ENCODE measurements at regions of chr2 and their contacts with region 1.

Region 1: DNA sequence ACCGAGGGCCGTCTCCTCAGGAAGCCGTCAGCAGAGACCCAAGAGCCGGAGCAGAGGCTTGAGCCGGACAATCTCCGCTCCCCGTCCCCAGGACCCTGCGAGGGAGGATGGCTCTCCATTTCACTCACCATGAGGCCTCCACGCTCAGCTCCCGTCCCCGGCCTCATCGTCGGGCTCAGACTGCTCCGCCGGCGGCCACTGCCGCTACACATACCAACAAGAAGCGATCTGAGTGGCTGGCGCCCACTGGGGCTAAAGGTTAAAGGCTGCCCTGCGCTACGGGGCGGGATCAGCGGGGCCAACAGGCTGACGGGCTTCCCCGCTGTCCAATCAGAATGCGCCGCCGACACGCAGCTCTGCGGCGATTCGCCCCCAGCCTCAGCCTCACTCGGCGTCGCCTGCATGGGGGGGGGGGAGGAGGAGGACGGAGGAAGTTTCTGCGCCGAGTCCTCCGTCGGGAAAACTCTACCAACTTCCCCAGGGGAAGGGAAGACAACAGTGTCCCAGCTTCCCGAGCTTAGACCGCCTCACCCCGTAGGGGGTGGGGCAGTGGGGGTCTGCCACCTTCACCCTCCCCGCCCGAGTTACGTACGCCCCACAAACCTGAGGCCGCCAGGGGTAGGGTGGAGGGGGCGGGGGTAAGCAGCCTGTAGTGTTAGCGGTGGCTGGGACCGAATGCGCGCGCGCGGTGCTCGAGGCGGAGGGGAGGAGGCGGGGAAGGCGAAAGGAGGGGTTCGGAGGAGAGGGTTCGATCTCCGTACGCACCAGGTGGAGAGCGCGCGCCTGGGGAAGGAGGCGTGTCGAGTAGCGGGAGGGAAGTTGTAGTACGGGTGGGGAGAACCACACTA is at the start of gene PRPF40A:
- DNase-seq: peak; percentile 98
- ATAC-seq: peak; percentile 76
- H3K4me3 ChIP-seq: peak within 1 kb of the TSS; percentile 99
- H3K27ac ChIP-seq: peak within 1 kb of the TSS; percentile 83
- H3K4me1 ChIP-seq: peaks cover 22% of the 10 kb centered on the region
- H3K27me3 ChIP-seq: no peaks in the 10 kb centered on the region
- CTCF ChIP-seq: no peak
- total RNA-seq, gene PRPF40A: 120 and 140 TPM in 2 replicates

Region 2: GRCh38 chr2:152638056-152638455 is 79.4 kb before region 1 on chr2:
- CTCF ChIA-PET with region 1: no interaction called
- POLR2A ChIA-PET with region 1: no interaction called
- intact Hi-C with region 1: no loop called
- DNase-seq: no peak
- ATAC-seq: no peak
- H3K4me3 ChIP-seq: no peak overlapping the region
- H3K27ac ChIP-seq: no peak overlapping the region
- H3K4me1 ChIP-seq: no peaks in the 10 kb centered on the region
- H3K27me3 ChIP-seq: no peaks in the 10 kb centered on the region
- CTCF ChIP-seq: no peak

Region 3: GRCh38 chr2:152694161-152694661 is 23.2 kb before region 1 on chr2:
- CTCF ChIA-PET with region 1: no interaction called
- POLR2A ChIA-PET with region 1: interaction called, 18 read pairs
- intact Hi-C with region 1: no loop called
- DNase-seq: no peak
- ATAC-seq: no peak
- H3K4me3 ChIP-seq: no peak overlapping the region
- H3K27ac ChIP-seq: no peak overlapping the region
- H3K4me1 ChIP-seq: no peaks in the 10 kb centered on the region
- H3K27me3 ChIP-seq: no peaks in the 10 kb centered on the region
- CTCF ChIP-seq: no peak

Region 4: GRCh38 chr2:152835674-152836073 is 118.2 kb after region 1 on chr2:
- CTCF ChIA-PET with region 1: no interaction called
- POLR2A ChIA-PET with region 1: no interaction called
- intact Hi-C with region 1: no loop called
- DNase-seq: no peak
- ATAC-seq: no peak
- H3K4me3 ChIP-seq: no peak overlapping the region
- H3K27ac ChIP-seq: no peak overlapping the region
- H3K4me1 ChIP-seq: no peaks in the 10 kb centered on the region
- H3K27me3 ChIP-seq: peaks cover 17% of the 10 kb centered on the region
- CTCF ChIP-seq: no peak

Region 5: DNA sequence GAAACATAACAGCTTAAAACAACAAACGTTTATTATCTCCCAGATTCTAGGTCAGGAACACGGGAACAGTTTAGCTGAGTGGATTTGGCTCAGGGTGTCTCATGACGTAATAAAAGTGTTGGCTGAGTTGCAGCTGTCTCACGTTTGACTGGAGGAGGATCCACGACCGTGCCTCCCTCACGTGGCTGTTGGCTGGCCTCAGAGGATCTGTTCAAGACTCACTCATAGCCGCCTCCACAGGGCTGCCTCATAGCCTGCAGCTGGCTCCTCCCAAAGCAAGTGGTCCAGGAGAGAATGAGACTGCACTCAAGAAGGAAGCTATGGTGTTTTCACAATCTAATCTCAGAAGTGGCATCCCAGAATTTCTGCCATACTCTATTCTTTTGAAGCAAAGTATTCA is 594.0 kb after region 1 on chr2:
- CTCF ChIA-PET with region 1: no interaction called
- POLR2A ChIA-PET with region 1: no interaction called
- intact Hi-C with region 1: no loop called
- DNase-seq: no peak
- ATAC-seq: no peak
- H3K4me3 ChIP-seq: no peak overlapping the region
- H3K27ac ChIP-seq: no peak overlapping the region
- H3K4me1 ChIP-seq: no peaks in the 10 kb centered on the region
- H3K27me3 ChIP-seq: peaks cover 10% of the 10 kb centered on the region; the same call in 1 of the 2 replicates
- CTCF ChIP-seq: no peak

Measured in PC-3 (cell line).